ENCODE measurements at regions of chr6 and their contacts with region 1.

Region 1: GRCh38 chr6:14108571-14109410 is 8.8 kb upstream of the CD83 start:
- DNase-seq: no peak
- H3K4me3 Mint-ChIP-seq: peak overlapping the region; percentile 66
- H3K27ac Mint-ChIP-seq: peak overlapping the region; percentile 88
- H3K4me1 Mint-ChIP-seq: peaks cover 35% of the 10 kb centered on the region
- H3K27me3 Mint-ChIP-seq: peaks cover 15% of the 10 kb centered on the region

Region 2: DNA sequence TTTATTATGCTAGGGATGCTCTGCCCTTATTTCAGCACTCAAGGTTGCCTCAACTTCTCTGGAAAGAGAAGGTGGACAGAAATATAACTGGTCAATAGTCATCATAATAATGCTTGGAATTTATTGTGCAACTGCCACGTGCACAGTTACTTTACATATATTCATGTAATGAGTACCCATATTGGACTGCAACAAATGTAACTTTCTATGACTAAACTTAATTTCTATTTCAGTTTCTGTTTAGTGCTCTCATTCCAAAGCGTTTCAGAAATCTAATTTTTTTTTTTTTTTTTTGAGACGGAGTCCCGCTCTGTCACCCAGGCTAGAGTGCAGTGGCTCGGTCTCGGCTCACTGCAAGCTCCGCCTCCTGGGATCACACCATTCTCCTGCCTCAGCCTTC is 19.6 kb before region 1 on chr6:
- intact Hi-C with region 1: loop called (anchors 1 kb)
- DNase-seq: no peak
- H3K4me3 Mint-ChIP-seq: no peak overlapping the region
- H3K27ac Mint-ChIP-seq: no peak overlapping the region
- H3K4me1 Mint-ChIP-seq: peaks cover 25% of the 10 kb centered on the region
- H3K27me3 Mint-ChIP-seq: peaks cover 9% of the 10 kb centered on the region

Measured in activated T-helper 1 cell treated with anti-CD3 and anti-CD28 coated beads, Interleukin-12 subunit alpha, Interleukin-12 subunit beta, Interleukin-2, Interleukin-4 antibody, amounts not matched to agents 30 ng/mL and 10 ng/mL and 1 ng/mL, durations not matched to agents 14 hours and 24 hours and 36 hours (primary cell).